ENCODE measurements at regions of chr15 and their contacts with region 1.

Region 1: GRCh38 chr15:78315686-78316282 is 16.4 kb upstream of the SKIC8 start:
- DNase-seq: peak in 1 of 2 donors; percentile 55
- ATAC-seq: peak; percentile 63

Region 2: GRCh38 chr15:78247911-78248310 is 67.9 kb before region 1 on chr15:
- intact Hi-C with region 1: no loop called
- DNase-seq: no peak
- ATAC-seq: no peak

Region 3: DNA sequence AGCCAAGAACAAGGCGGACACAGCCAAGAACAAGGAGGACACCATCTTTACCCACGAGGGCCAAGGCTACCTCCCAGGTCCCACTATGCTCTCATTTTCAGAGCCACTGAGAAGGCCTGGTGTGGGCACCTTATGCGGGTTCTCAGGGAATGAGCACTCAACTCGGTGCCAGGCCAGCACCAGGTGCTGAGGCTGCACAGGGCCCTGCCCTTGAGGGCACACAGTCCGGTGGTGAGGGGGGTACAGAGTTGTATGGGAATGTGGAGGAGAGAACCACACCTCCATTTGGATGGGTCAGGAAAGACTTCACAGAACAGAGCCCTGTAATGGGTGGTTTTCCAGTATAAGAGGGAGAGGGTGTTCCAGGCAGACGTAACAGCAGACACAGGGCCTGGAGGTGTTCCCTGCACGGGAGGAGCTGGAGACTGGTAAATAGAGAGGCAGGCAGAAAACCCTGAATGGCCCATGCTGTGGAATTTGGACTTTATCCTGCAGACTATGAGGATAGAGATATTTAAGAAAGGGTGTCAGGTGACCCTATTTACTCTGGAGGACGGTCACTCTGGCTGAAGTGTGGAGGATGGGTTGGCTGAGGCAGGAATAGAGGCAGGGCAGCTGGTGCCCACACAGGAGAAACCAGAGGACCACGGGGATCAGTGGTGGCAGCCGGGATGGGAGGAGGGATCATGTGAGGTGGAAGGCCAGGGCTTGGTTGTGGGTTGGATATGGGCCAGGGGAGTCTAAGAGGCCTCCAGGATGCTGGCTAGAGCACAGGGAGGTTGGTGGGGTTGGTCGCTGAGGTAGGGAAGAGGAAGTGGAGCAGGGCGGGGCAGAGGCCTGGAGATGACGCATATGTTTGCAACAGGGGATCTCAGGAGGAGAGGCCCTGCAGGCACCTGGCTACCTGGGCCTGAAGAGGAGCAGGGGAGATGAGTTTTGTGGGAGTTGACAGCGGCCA is 58.9 kb after region 1 on chr15:
- intact Hi-C with region 1: no loop called
- DNase-seq: peak; percentile 86 to 92
- ATAC-seq: peak; percentile 89

Region 4: DNA sequence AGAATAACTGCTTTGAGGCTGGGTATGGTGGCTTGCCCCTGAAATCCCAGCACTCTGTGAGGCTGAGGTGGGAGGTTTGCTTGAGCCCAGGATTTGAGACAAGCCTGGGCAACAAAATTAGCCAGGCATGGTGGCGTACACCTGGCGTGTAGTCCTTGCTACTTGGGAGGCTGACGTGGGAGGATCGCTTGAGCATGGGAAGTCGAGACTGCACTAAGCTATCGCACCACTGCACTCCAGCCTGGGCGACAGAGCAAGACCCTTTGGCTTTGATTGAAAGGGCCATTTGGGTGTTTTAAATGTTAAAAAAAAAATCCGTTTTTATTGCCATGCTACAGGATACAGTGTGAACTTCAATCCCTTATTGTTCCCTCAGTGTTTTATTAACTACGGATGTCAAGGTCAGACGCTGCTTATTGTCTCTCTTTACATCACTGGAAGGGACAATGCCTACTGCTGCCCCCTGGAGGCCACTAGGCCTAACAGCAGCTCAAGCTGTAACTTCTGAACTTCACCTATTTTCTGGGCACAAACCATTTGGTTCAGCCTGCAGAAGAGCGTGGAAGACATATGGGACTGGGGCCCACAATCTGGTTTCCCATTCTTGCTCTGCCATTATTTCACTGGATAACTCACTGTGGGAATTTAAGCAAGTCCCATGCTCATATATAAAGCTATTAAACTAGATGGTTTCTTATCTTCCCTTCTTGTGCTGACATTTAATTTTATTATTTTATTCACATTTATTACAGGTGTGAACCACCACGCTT is 107.0 kb after region 1 on chr15:
- intact Hi-C with region 1: loop called in 1 of 2 experiments (anchors 2 kb)
- DNase-seq: peak; percentile 65 to 79
- ATAC-seq: peak; percentile 89

Measured in left colon (tissue), 2 donors.